ENCODE measurements at regions of chr11 and their contacts with region 1.

Region 1: GRCh38 chr11:86014221-86014620 is 54.7 kb downstream of the PICALM start:
- DNase-seq: no peak
- H3K4me3 ChIP-seq: no peak overlapping the region
- H3K4me3 Mint-ChIP-seq: no peak overlapping the region
- H3K27ac ChIP-seq: peak overlapping the region in 1 of 2 donors; percentile 62
- H3K27ac Mint-ChIP-seq: peak overlapping the region in 1 of 7 donors; percentile 21
- H3K4me1 ChIP-seq: no peaks in the 10 kb centered on the region
- H3K4me1 Mint-ChIP-seq: peaks cover 4% of the 10 kb centered on the region
- H3K27me3 ChIP-seq: no peaks in the 10 kb centered on the region
- H3K27me3 Mint-ChIP-seq: no peaks in the 10 kb centered on the region
- CTCF ChIP-seq: no peak

Region 2: GRCh38 chr11:85961930-85962363 is 52.3 kb before region 1 on chr11:
- intact Hi-C with region 1: loop called in 1 of 2 experiments (anchors 10 kb)
- DNase-seq: no peak
- H3K4me3 ChIP-seq: no peak overlapping the region
- H3K4me3 Mint-ChIP-seq: no peak overlapping the region
- H3K27ac ChIP-seq: no peak overlapping the region
- H3K27ac Mint-ChIP-seq: peak overlapping the region in 2 of 7 donors; percentile 2 to 16
- H3K4me1 ChIP-seq: no peaks in the 10 kb centered on the region
- H3K4me1 Mint-ChIP-seq: no peaks in the 10 kb centered on the region
- H3K27me3 ChIP-seq: no peaks in the 10 kb centered on the region
- H3K27me3 Mint-ChIP-seq: no peaks in the 10 kb centered on the region
- CTCF ChIP-seq: no peak

Region 3: DNA sequence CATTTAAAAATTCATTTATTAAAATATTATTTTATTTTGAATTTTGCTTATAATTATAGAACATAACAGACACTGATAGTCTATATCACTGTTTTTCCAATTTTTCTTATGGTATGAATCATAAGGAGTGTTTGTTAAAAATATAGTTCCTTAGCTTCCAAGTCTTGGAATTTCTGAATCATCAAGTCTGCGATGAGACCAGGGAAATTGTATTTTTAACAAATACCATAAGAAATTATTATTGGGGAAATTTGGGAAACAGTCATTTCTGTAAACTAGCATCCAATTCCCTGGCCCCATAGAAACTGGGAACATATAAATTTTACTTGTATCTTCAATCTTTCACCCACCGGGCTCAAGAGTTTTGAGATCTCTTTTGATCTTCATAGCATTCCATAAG is 92.7 kb after region 1 on chr11:
- intact Hi-C with region 1: no loop called
- DNase-seq: no peak
- H3K4me3 ChIP-seq: no peak overlapping the region
- H3K4me3 Mint-ChIP-seq: no peak overlapping the region
- H3K27ac ChIP-seq: no peak overlapping the region
- H3K27ac Mint-ChIP-seq: no peak overlapping the region
- H3K4me1 ChIP-seq: peaks cover 0 to 2% of the 10 kb centered on the region in 2 donors
- H3K4me1 Mint-ChIP-seq: peaks cover 8% of the 10 kb centered on the region
- H3K27me3 ChIP-seq: no peaks in the 10 kb centered on the region
- H3K27me3 Mint-ChIP-seq: peaks cover 0 to 2% (median 0%) of the 10 kb centered on the region in 3 donors
- CTCF ChIP-seq: no peak